HCT116 (cell line): ENCODE measurements at regions of chr17 and their contacts with region 1.

Region 1: GRCh38 chr17:45305532-45306087 is 11.2 kb downstream of the MAP3K14 start:
- DNase-seq: no peak
- ATAC-seq: peak; percentile 25; the same call in 1 of the 2 replicates
- H3K4me3 ChIP-seq: no peak overlapping the region
- H3K27ac ChIP-seq: no peak overlapping the region
- H3K4me1 ChIP-seq: peaks cover 34 to 67% of the 10 kb centered on the region in 2 experiments
- H3K27me3 ChIP-seq: no peaks in the 10 kb centered on the region
- CTCF ChIP-seq: no peak
- POLR2A ChIP-seq: no peak
- RAD21 ChIP-seq: no peak

Region 2: DNA sequence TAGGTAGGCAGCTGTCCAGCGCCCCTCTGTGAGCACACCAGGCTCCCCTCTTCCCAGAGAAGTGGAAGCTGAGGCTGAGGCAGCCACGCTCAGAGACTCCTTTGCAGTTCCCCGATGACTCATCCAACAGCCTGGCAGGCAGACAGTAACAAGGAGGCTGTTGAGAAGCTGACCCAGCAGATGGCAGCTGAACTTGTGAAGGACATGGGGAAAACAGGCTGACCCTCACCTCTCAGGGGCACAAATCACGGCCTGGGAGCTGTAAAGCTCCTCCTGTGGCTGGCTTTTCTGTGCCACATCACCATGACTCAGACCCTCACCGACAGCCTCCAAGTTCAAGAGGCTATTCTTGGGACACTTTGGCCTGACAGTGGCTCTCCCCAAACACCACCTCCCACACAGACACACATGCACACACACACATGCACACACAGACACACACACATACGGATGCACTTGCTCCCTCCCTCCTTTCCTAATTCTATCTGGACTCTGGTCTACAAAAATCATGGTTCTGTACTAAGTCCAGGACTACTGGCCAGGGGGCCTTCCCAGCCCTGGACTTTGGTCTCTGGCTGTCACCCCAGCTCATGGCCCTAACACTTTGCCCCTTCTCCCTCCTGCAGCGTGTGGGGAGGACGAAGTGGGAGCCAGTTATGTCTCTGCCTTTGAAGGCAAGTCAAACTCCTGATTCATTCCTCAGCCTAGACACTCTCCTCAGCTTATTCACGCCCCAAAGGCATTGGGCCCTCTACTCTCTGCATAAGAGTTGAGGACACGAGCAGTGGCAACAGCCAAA is 12.0 kb before region 1 on chr17:
- CTCF ChIA-PET with region 1: interaction called, 4 read pairs
- POLR2A ChIA-PET with region 1: interaction called, 4 read pairs
- RAD21 ChIA-PET with region 1: no interaction called
- intact Hi-C with region 1: loop called (anchors 1 kb)
- DNase-seq: peak; percentile 65
- ATAC-seq: peak; percentile 85
- H3K4me3 ChIP-seq: peak overlapping the region in 1 of 2 experiments; percentile 9; a peak in 1 of 4 replicates
- H3K27ac ChIP-seq: peak overlapping the region; percentile 36
- H3K4me1 ChIP-seq: peaks cover 37 to 62% of the 10 kb centered on the region in 2 experiments
- H3K27me3 ChIP-seq: no peaks in the 10 kb centered on the region
- CTCF ChIP-seq: 0 out of 6 replicates have a peak, but pooled peaks of 1 of the 3 experiments have one; percentile 4
- POLR2A ChIP-seq: no peak
- RAD21 ChIP-seq: peak; percentile 40; the same call in 1 of the 2 replicates

Region 3: DNA sequence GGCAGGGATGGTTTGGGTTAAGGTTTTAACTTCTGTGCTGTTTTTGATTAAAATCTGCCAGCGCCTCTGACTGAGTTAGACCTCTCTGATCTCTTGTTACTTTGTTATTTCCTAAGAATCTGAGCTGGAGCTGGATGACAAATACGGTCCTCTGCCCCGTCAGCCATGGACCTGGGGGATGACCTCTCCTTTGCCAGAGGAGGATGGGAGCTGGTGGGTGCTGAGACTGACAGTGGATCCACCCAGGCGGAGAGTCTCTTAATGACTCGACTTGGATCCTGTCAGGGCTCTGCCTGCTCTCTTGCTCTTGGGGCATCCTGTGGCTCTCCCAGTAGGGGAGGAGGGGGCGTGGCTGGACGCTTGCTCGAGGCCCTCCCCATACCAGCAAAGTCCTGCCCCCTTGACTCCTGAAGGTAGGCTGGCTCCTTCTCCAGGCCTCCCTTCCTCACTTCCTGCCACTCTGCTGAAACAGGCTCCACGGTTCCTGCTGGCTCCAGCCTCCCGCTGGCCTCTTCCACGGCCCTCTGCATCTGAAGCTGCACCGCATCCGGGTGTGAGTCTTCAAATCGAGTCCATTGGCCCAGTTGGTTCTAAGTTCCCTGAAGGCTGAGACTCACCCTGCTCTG is 36.0 kb after region 1 on chr17:
- CTCF ChIA-PET with region 1: no interaction called
- POLR2A ChIA-PET with region 1: no interaction called
- RAD21 ChIA-PET with region 1: no interaction called
- intact Hi-C with region 1: no loop called
- DNase-seq: peak; percentile 66
- ATAC-seq: peak; percentile 99
- H3K4me3 ChIP-seq: peak overlapping the region; percentile 35 to 52
- H3K27ac ChIP-seq: peak overlapping the region; percentile 62
- H3K4me1 ChIP-seq: peaks cover 21 to 34% of the 10 kb centered on the region in 2 experiments
- H3K27me3 ChIP-seq: no peaks in the 10 kb centered on the region
- CTCF ChIP-seq: no peak
- POLR2A ChIP-seq: peak; percentile 69
- RAD21 ChIP-seq: no peak

Region 4: GRCh38 chr17:45451141-45451540 is 145.5 kb after region 1 on chr17:
- CTCF ChIA-PET with region 1: no interaction called
- POLR2A ChIA-PET with region 1: no interaction called
- RAD21 ChIA-PET with region 1: no interaction called
- intact Hi-C with region 1: no loop called
- DNase-seq: no peak
- ATAC-seq: peak; percentile 58; the same call in 1 of the 2 replicates
- H3K4me3 ChIP-seq: no peak overlapping the region
- H3K27ac ChIP-seq: no peak overlapping the region
- H3K4me1 ChIP-seq: peaks cover 0 to 2% of the 10 kb centered on the region in 2 experiments; a peak in 1 of 4 replicates
- H3K27me3 ChIP-seq: no peaks in the 10 kb centered on the region
- CTCF ChIP-seq: peak; percentile 16 to 45 (median 20); a peak in 1 of 6 replicates
- POLR2A ChIP-seq: no peak
- RAD21 ChIP-seq: peak; percentile 35; the same call in 1 of the 2 replicates